CD8-positive, alpha-beta T cell (primary cell): ENCODE measurements at regions of chr15 and their contacts with region 1.

Region 1: DNA sequence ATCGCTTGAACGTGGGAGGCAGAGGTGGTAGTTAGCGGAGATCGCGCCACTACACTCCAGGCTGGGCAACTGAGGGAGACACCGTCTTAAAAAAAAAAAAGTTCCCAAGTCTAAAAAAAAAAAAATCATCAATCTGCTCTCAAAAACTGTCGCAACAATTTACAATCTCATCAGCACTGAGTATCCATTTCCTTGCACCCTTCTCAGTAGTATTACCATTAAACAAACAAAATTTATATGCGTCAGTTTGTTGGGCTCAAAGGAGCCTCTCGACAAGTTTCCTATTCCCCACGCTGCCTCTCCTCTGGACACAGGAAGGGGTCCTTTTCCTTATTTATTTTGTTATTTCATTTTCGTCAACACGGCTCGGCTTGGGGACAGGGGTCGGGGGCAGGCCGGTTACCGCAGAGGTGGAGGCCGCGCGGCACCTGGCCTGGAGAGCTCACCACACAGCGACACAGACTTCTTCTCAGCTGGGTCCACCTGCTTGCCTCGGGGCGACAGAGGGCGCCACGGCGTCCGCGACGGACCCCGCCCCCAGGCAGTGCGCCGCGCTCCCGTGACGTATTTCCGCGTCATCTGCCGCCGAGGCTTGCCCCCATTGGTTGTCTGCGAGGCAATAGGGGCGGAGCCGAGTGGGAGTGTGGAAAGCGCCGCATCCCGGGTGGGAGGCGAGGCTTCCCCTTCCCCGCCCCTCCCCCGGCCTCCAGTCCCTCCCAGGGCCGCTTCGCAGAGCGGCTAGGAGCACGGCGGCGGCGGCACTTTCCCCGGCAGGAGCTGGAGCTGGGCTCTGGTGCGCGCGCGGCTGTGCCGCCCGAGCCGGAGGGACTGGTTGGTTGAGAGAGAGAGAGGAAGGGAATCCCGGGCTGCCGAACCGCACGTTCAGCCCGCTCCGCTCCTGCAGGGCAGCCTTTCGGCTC is at the start of gene MAP2K1:
- DNase-seq: peak; percentile 96 to 100 (median 99)
- ATAC-seq: peak; percentile 88
- H3K4me3 ChIP-seq: peak within 1 kb of the TSS; percentile 62 to 72
- H3K4me3 Mint-ChIP-seq: peak within 1 kb of the TSS; percentile 95
- H3K27ac ChIP-seq: peak within 1 kb of the TSS; percentile 85 to 90
- H3K27ac Mint-ChIP-seq: peak within 1 kb of the TSS; percentile 99
- H3K4me1 ChIP-seq: peaks cover 51% of the 10 kb centered on the region
- H3K4me1 Mint-ChIP-seq: peaks cover 46% of the 10 kb centered on the region
- H3K27me3 ChIP-seq: no peaks in the 10 kb centered on the region
- H3K27me3 Mint-ChIP-seq: no peaks in the 10 kb centered on the region
- CTCF ChIP-seq: peak; percentile 71
- total RNA-seq, gene MAP2K1: 21.9 to 23.7 TPM

Region 2: GRCh38 chr15:65610871-65611718 is 775.4 kb before region 1 on chr15 and contains the start of gene INTS14:
- CTCF ChIA-PET with region 1: no interaction called
- POLR2A ChIA-PET with region 1: no interaction called
- intact Hi-C with region 1: loop called in 1 of 2 experiments (anchors 2 kb)
- DNase-seq: peak; percentile 81 to 95 (median 92)
- ATAC-seq: peak; percentile 95
- H3K4me3 ChIP-seq: peak within 1 kb of the TSS; percentile 85 to 96
- H3K4me3 Mint-ChIP-seq: peak within 1 kb of the TSS; percentile 97
- H3K27ac ChIP-seq: peak within 1 kb of the TSS; percentile 80 to 95
- H3K27ac Mint-ChIP-seq: peak within 1 kb of the TSS; percentile 98
- H3K4me1 ChIP-seq: peaks cover 17% of the 10 kb centered on the region
- H3K4me1 Mint-ChIP-seq: peaks cover 43% of the 10 kb centered on the region
- H3K27me3 ChIP-seq: no peaks in the 10 kb centered on the region
- H3K27me3 Mint-ChIP-seq: no peaks in the 10 kb centered on the region
- CTCF ChIP-seq: peak; percentile 26
- total RNA-seq, gene INTS14: 26.7 to 28.6 TPM

Region 3: DNA sequence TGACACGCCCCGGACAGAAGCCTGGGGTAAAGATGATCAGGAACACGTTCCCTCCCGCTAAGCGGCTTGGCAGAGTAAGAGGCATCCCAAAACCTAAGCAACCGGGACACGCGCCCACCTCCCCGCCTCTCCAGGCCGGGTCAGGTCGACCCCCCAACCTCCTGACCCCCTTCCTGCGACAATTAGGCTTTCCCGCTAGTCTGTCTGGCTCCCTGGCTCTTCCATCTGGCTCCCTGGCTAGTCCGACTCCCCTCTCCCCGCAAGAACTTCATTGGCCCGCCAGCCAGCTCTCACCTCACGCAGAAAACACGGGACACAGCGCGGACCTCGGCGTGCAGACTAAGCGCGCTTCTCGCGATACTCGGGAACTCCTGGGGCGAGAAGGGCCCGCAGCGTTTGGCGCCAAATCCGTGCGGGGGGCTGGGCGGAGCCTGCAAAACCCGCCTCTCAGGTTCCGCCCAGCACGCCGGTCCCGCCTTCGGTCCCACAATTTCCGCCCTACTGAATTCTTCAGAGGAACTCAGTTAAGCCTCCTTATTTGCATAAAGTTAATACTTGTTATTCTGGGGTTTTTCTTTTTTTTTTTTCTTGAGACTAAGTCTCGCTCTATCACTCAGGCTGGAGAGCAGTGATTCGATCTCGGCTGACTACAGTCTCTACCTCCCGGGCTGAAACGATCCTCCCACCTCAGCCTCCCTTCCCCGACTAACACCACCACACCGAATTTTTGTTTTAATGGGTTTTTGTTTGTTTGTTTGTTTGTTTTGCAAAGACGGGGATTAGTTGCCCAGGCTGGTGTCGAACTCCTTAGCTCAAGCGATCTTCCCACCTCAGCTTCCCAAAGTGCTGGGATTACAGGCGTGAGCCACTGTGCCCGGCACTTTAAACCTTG is 29.9 kb before region 1 on chr15 and contains the start of gene TIPIN:
- CTCF ChIA-PET with region 1: interaction called, 3 read pairs
- POLR2A ChIA-PET with region 1: interaction called, 5 read pairs
- intact Hi-C with region 1: loop called (anchors 1 kb)
- DNase-seq: peak; percentile 92 to 98 (median 97)
- ATAC-seq: peak; percentile 97
- H3K4me3 ChIP-seq: peak within 1 kb of the TSS; percentile 69 to 76
- H3K4me3 Mint-ChIP-seq: peak within 1 kb of the TSS; percentile 99
- H3K27ac ChIP-seq: peak within 1 kb of the TSS; percentile 50 to 69
- H3K27ac Mint-ChIP-seq: peak within 1 kb of the TSS; percentile 96
- H3K4me1 ChIP-seq: peaks cover 14% of the 10 kb centered on the region
- H3K4me1 Mint-ChIP-seq: peaks cover 19% of the 10 kb centered on the region
- H3K27me3 ChIP-seq: no peaks in the 10 kb centered on the region
- H3K27me3 Mint-ChIP-seq: no peaks in the 10 kb centered on the region
- CTCF ChIP-seq: no peak
- total RNA-seq, gene TIPIN: 4.8 to 4.9 TPM

Region 4: DNA sequence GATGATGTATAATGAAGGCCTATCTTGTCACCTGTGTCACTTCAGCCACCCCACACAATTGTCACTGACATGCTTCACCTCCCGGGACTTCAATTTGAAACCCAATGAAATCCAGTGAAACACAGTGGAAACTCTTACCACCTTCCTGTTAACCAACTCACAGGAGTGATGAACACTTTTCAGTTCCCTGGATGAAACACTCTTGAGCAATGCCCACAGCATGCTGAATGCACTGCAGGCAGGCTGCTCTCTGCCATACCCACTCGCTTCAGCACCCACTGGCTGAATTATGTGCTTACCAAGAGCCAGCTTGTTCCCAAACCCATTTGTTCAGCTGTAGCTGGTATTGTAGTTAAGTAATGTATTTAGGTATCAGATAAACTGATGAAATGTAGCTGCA is 47.3 kb after region 1 on chr15:
- CTCF ChIA-PET with region 1: no interaction called
- POLR2A ChIA-PET with region 1: no interaction called
- intact Hi-C with region 1: loop called in 1 of 2 experiments (anchors 5 kb)
- DNase-seq: no peak
- ATAC-seq: no peak
- H3K4me3 ChIP-seq: no peak overlapping the region
- H3K4me3 Mint-ChIP-seq: no peak overlapping the region
- H3K27ac ChIP-seq: no peak overlapping the region
- H3K27ac Mint-ChIP-seq: peak overlapping the region; percentile 60
- H3K4me1 ChIP-seq: peaks cover 2% of the 10 kb centered on the region
- H3K4me1 Mint-ChIP-seq: peaks cover 48% of the 10 kb centered on the region
- H3K27me3 ChIP-seq: no peaks in the 10 kb centered on the region
- H3K27me3 Mint-ChIP-seq: no peaks in the 10 kb centered on the region
- CTCF ChIP-seq: no peak

Region 5: GRCh38 chr15:66497502-66498455 is 111.3 kb after region 1 on chr15 and contains the start of gene SNAPC5:
- CTCF ChIA-PET with region 1: interaction called, 71 read pairs
- POLR2A ChIA-PET with region 1: interaction called, 63 read pairs
- intact Hi-C with region 1: loop called (anchors 1 kb)
- DNase-seq: peak; percentile 95 to 99 (median 97)
- ATAC-seq: peak; percentile 94
- H3K4me3 ChIP-seq: peak within 1 kb of the TSS; percentile 89 to 98
- H3K4me3 Mint-ChIP-seq: peak within 1 kb of the TSS; percentile 96
- H3K27ac ChIP-seq: peak within 1 kb of the TSS; percentile 93 to 96
- H3K27ac Mint-ChIP-seq: peak within 1 kb of the TSS; percentile 97
- H3K4me1 ChIP-seq: peaks cover 32% of the 10 kb centered on the region
- H3K4me1 Mint-ChIP-seq: peaks cover 57% of the 10 kb centered on the region
- H3K27me3 ChIP-seq: no peaks in the 10 kb centered on the region
- H3K27me3 Mint-ChIP-seq: no peaks in the 10 kb centered on the region
- CTCF ChIP-seq: peak; percentile 98
- total RNA-seq, gene SNAPC5: 22.3 to 25.3 TPM

Region 6: GRCh38 chr15:67413770-67414394 is 1027.4 kb after region 1 on chr15:
- CTCF ChIA-PET with region 1: no interaction called
- POLR2A ChIA-PET with region 1: no interaction called
- intact Hi-C with region 1: no loop called
- DNase-seq: no peak
- ATAC-seq: no peak
- H3K4me3 ChIP-seq: no peak overlapping the region
- H3K4me3 Mint-ChIP-seq: no peak overlapping the region
- H3K27ac ChIP-seq: no peak overlapping the region
- H3K27ac Mint-ChIP-seq: no peak overlapping the region
- H3K4me1 ChIP-seq: no peaks in the 10 kb centered on the region
- H3K4me1 Mint-ChIP-seq: no peaks in the 10 kb centered on the region
- H3K27me3 ChIP-seq: no peaks in the 10 kb centered on the region
- H3K27me3 Mint-ChIP-seq: no peaks in the 10 kb centered on the region
- CTCF ChIP-seq: no peak

Region 7: GRCh38 chr15:67542420-67543347 is 1156.2 kb after region 1 on chr15 and contains the start of gene MAP2K5:
- CTCF ChIA-PET with region 1: no interaction called
- POLR2A ChIA-PET with region 1: no interaction called
- intact Hi-C with region 1: loop called in 1 of 2 experiments (anchors 5 kb)
- DNase-seq: peak; percentile 57 to 91 (median 82)
- ATAC-seq: peak; percentile 71
- H3K4me3 ChIP-seq: peak within 1 kb of the TSS; percentile 91 to 93
- H3K4me3 Mint-ChIP-seq: peak within 1 kb of the TSS; percentile 97
- H3K27ac ChIP-seq: peak within 1 kb of the TSS; percentile 81 to 86
- H3K27ac Mint-ChIP-seq: peak within 1 kb of the TSS; percentile 99
- H3K4me1 ChIP-seq: peaks cover 24% of the 10 kb centered on the region
- H3K4me1 Mint-ChIP-seq: peaks cover 56% of the 10 kb centered on the region
- H3K27me3 ChIP-seq: no peaks in the 10 kb centered on the region
- H3K27me3 Mint-ChIP-seq: no peaks in the 10 kb centered on the region
- CTCF ChIP-seq: no peak
- total RNA-seq, gene MAP2K5: 20.5 to 21.2 TPM